ENCODE measurements at regions of chr5 and their contacts with region 1.

Region 1: DNA sequence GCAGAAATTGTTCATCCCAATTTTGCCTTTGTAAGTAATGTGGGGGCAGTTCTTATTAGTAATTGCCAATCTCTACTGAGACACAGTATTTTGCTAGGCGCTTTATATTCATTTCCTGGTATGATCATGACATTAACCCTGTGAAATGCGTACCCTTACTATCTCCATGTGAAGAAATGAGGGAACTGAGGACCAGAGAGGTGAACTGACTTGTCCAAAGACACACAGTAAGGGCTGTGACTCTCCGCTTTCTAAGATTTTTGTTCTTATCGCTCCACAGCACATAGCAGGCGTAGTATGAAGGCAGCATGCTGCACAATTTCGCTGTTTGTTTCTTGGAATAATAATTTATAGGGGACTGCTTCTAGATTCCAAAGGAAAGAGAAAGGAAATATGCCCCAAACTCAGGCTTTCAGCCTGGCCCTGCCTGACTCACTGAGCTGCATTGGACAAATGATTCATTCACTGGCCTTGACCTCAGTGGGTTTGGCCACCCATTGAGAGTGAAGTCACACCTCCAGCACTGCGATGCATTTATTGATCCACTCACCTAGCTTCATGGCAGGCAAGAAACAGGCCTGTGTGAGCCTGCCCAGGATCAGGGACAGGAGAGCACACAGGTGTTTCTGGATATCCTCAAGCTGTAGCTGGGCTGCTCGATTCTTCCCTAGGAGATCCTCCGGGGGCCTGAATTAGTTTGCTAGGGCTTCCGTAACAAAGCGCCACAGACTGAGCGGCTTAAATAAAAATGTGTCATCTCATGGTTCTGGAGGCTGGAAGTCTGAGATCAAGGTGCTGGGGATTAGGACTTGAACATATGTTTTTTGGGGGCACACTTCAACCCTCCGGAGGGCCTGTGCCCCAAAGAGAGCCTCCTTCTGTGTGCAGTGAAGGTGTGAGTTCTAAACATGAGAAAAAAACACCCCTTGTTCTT is 7.2 kb upstream of the DUSP1 start:
- DNase-seq: peak in 1 of 2 donors; percentile 86
- H3K4me3 ChIP-seq: no peak overlapping the region
- H3K27ac ChIP-seq: peak overlapping the region; percentile 63 to 78
- H3K4me1 ChIP-seq: peaks cover 13 to 40% of the 10 kb centered on the region in 2 donors
- H3K27me3 ChIP-seq: no peaks in the 10 kb centered on the region
- CTCF ChIP-seq: no peak

Region 2: GRCh38 chr5:172788771-172789686 is 10.9 kb after region 1 on chr5:
- intact Hi-C with region 1: loop called (anchors 1 kb)
- DNase-seq: peak in 1 of 2 donors; percentile 84
- H3K4me3 ChIP-seq: peak overlapping the region in 1 of 2 donors; percentile 31
- H3K27ac ChIP-seq: peak overlapping the region; percentile 94 to 95
- H3K4me1 ChIP-seq: peaks cover 24 to 54% of the 10 kb centered on the region in 2 donors
- H3K27me3 ChIP-seq: no peaks in the 10 kb centered on the region
- CTCF ChIP-seq: no peak

Measured in ascending aorta (tissue), 2 donors.